ENCODE measurements at regions of chr17 and their contacts with region 1.

Region 1: GRCh38 chr17:39687811-39688518 is at the start of gene PGAP3:
- DNase-seq: peak; percentile 60 to 93
- H3K4me3 ChIP-seq: peak within 1 kb of the TSS; percentile 50 to 79
- H3K27ac ChIP-seq: peak within 1 kb of the TSS; percentile 92 to 95
- H3K4me1 ChIP-seq: peaks cover 0 to 13% of the 10 kb centered on the region in 2 donors
- H3K27me3 ChIP-seq: no peaks in the 10 kb centered on the region
- CTCF ChIP-seq: no peak
- total RNA-seq, gene PGAP3: 29.5 TPM

Region 2: GRCh38 chr17:39677542-39678339 is 10.2 kb before region 1 on chr17:
- intact Hi-C with region 1: loop called (anchors 1 kb)
- DNase-seq: peak; percentile 49 to 92
- H3K4me3 ChIP-seq: peak overlapping the region in 1 of 2 donors; percentile 11
- H3K27ac ChIP-seq: peak overlapping the region; percentile 90 to 95
- H3K4me1 ChIP-seq: peaks cover 23 to 43% of the 10 kb centered on the region in 2 donors
- H3K27me3 ChIP-seq: no peaks in the 10 kb centered on the region
- CTCF ChIP-seq: no peak

Region 3: GRCh38 chr17:39699818-39700147 is 11.8 kb after region 1 on chr17 and contains the start of gene ERBB2:
- intact Hi-C with region 1: loop called (anchors 1 kb)
- DNase-seq: peak in 1 of 2 donors; percentile 90
- H3K4me3 ChIP-seq: peak within 1 kb of the TSS; percentile 84
- H3K27ac ChIP-seq: peak within 1 kb of the TSS; percentile 87 to 91
- H3K4me1 ChIP-seq: peaks cover 0 to 21% of the 10 kb centered on the region in 2 donors
- H3K27me3 ChIP-seq: no peaks in the 10 kb centered on the region
- CTCF ChIP-seq: no peak
- total RNA-seq, gene ERBB2: 124 TPM

Measured in ascending aorta (tissue), 2 donors.